ENCODE measurements at regions of chr12 and their contacts with region 1.

Region 1: GRCh38 chr12:42023733-42024494 is 120.8 kb downstream of the GXYLT1 start:
- DNase-seq: peak; percentile 41 to 82 (median 66)
- ATAC-seq: peak; percentile 90
- H3K4me3 ChIP-seq: peak overlapping the region; percentile 32 to 47
- H3K4me3 Mint-ChIP-seq: peak overlapping the region; percentile 78
- H3K27ac ChIP-seq: no peak overlapping the region
- H3K27ac Mint-ChIP-seq: no peak overlapping the region
- H3K4me1 ChIP-seq: peaks cover 4% of the 10 kb centered on the region
- H3K4me1 Mint-ChIP-seq: peaks cover 9% of the 10 kb centered on the region
- H3K27me3 ChIP-seq: no peaks in the 10 kb centered on the region
- H3K27me3 Mint-ChIP-seq: peaks cover 24% of the 10 kb centered on the region
- CTCF ChIP-seq: peak; percentile 95

Region 2: GRCh38 chr12:40946612-40947194 is 1077.2 kb before region 1 on chr12:
- CTCF ChIA-PET with region 1: interaction called, 12 read pairs
- POLR2A ChIA-PET with region 1: no interaction called
- intact Hi-C with region 1: loop called (anchors 2 to 5 kb)
- DNase-seq: peak in 2 of 9 experiments; percentile 17 to 33
- ATAC-seq: no peak
- H3K4me3 ChIP-seq: no peak overlapping the region
- H3K4me3 Mint-ChIP-seq: no peak overlapping the region
- H3K27ac ChIP-seq: no peak overlapping the region
- H3K27ac Mint-ChIP-seq: no peak overlapping the region
- H3K4me1 ChIP-seq: no peaks in the 10 kb centered on the region
- H3K4me1 Mint-ChIP-seq: no peaks in the 10 kb centered on the region
- H3K27me3 ChIP-seq: no peaks in the 10 kb centered on the region
- H3K27me3 Mint-ChIP-seq: no peaks in the 10 kb centered on the region
- CTCF ChIP-seq: peak; percentile 61

Region 3: DNA sequence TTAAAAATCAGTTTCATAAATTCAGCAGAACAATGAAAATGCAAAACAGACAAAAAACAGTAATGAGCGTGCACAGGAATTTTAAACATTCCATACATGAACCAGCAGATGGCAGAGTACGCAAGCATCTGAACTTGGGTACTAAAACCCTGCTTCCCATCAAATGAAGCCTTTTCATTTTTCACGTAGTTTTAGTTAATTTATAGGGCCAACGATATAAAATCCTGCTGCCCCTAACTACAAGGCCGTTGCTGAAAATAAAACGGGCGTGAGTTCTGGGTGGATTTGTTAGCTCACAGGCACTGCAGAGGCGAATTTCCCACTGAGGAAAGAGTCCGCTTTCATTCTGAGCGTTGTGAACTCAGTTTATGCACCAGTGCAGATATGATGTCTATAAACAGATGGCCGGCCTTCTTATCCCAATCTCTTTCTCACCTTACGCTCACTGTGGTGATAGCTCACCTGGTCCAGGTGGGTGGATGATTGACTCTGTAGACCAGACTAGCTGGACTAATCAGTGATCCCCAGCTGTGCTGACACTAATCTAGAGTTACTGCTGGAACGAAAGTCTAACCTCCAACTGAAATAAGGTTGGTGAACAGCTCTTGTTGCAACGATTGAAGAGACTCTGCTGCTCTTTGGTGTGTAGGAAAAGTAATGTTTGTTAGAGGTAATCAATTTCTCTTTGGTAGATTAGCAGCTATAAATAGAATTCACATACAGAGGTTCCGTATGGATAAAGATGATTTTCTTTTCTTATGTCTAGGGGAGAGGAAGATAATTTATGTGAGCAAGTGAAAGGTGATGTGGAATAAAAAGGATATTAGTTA is 746.6 kb before region 1 on chr12:
- CTCF ChIA-PET with region 1: interaction called, 3 read pairs
- POLR2A ChIA-PET with region 1: no interaction called
- intact Hi-C with region 1: loop called in 1 of 2 experiments (anchors 10 kb)
- DNase-seq: peak in 2 of 9 experiments; percentile 13 to 33
- ATAC-seq: no peak
- H3K4me3 ChIP-seq: no peak overlapping the region
- H3K4me3 Mint-ChIP-seq: no peak overlapping the region
- H3K27ac ChIP-seq: no peak overlapping the region
- H3K27ac Mint-ChIP-seq: no peak overlapping the region
- H3K4me1 ChIP-seq: no peaks in the 10 kb centered on the region
- H3K4me1 Mint-ChIP-seq: no peaks in the 10 kb centered on the region
- H3K27me3 ChIP-seq: no peaks in the 10 kb centered on the region
- H3K27me3 Mint-ChIP-seq: peaks cover 3% of the 10 kb centered on the region
- CTCF ChIP-seq: peak; percentile 37

Region 4: GRCh38 chr12:41784957-41785356 is 239.0 kb before region 1 on chr12:
- CTCF ChIA-PET with region 1: no interaction called
- POLR2A ChIA-PET with region 1: no interaction called
- intact Hi-C with region 1: no loop called
- DNase-seq: no peak
- ATAC-seq: no peak
- H3K4me3 ChIP-seq: no peak overlapping the region
- H3K4me3 Mint-ChIP-seq: no peak overlapping the region
- H3K27ac ChIP-seq: no peak overlapping the region
- H3K27ac Mint-ChIP-seq: no peak overlapping the region
- H3K4me1 ChIP-seq: no peaks in the 10 kb centered on the region
- H3K4me1 Mint-ChIP-seq: no peaks in the 10 kb centered on the region
- H3K27me3 ChIP-seq: no peaks in the 10 kb centered on the region
- H3K27me3 Mint-ChIP-seq: peaks cover 6% of the 10 kb centered on the region
- CTCF ChIP-seq: no peak

Region 5: DNA sequence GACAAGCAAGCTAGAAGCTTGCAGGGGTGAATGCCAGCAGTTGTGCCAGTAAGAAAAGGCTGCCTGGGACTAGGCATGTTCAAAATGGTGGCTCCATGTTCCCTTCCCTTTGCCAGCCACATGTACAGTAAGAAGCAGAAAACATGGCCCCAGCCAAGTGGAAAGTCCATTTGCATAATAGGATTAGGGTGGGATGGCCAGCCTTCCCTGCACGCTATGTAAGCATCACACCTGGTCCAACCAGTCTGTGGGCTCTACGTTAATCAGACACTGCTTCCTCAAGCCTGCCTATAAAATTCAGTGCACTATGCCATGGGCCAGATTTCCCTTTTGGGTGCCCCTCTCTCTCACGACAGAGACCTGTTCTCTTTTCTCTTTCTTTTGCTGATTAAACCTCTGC is 167.7 kb before region 1 on chr12:
- CTCF ChIA-PET with region 1: no interaction called
- POLR2A ChIA-PET with region 1: no interaction called
- intact Hi-C with region 1: no loop called
- DNase-seq: no peak
- ATAC-seq: no peak
- H3K4me3 ChIP-seq: no peak overlapping the region
- H3K4me3 Mint-ChIP-seq: no peak overlapping the region
- H3K27ac ChIP-seq: no peak overlapping the region
- H3K27ac Mint-ChIP-seq: no peak overlapping the region
- H3K4me1 ChIP-seq: no peaks in the 10 kb centered on the region
- H3K4me1 Mint-ChIP-seq: no peaks in the 10 kb centered on the region
- H3K27me3 ChIP-seq: no peaks in the 10 kb centered on the region
- H3K27me3 Mint-ChIP-seq: peaks cover 5% of the 10 kb centered on the region
- CTCF ChIP-seq: no peak

Region 6: GRCh38 chr12:41998436-41998835 is 25.5 kb before region 1 on chr12:
- CTCF ChIA-PET with region 1: interaction called, 12 read pairs
- POLR2A ChIA-PET with region 1: no interaction called
- intact Hi-C with region 1: no loop called
- DNase-seq: no peak
- ATAC-seq: no peak
- H3K4me3 ChIP-seq: no peak overlapping the region
- H3K4me3 Mint-ChIP-seq: no peak overlapping the region
- H3K27ac ChIP-seq: no peak overlapping the region
- H3K27ac Mint-ChIP-seq: no peak overlapping the region
- H3K4me1 ChIP-seq: no peaks in the 10 kb centered on the region
- H3K4me1 Mint-ChIP-seq: no peaks in the 10 kb centered on the region
- H3K27me3 ChIP-seq: no peaks in the 10 kb centered on the region
- H3K27me3 Mint-ChIP-seq: peaks cover 3% of the 10 kb centered on the region
- CTCF ChIP-seq: no peak

Region 7: GRCh38 chr12:42053456-42053855 is 29.5 kb after region 1 on chr12:
- CTCF ChIA-PET with region 1: interaction called, 10 read pairs
- POLR2A ChIA-PET with region 1: no interaction called
- intact Hi-C with region 1: no loop called
- DNase-seq: no peak
- ATAC-seq: no peak
- H3K4me3 ChIP-seq: no peak overlapping the region
- H3K4me3 Mint-ChIP-seq: no peak overlapping the region
- H3K27ac ChIP-seq: no peak overlapping the region
- H3K27ac Mint-ChIP-seq: no peak overlapping the region
- H3K4me1 ChIP-seq: no peaks in the 10 kb centered on the region
- H3K4me1 Mint-ChIP-seq: no peaks in the 10 kb centered on the region
- H3K27me3 ChIP-seq: peaks cover 2 to 4% of the 10 kb centered on the region in 2 experiments
- H3K27me3 Mint-ChIP-seq: peaks cover 21% of the 10 kb centered on the region
- CTCF ChIP-seq: no peak

Region 8: DNA sequence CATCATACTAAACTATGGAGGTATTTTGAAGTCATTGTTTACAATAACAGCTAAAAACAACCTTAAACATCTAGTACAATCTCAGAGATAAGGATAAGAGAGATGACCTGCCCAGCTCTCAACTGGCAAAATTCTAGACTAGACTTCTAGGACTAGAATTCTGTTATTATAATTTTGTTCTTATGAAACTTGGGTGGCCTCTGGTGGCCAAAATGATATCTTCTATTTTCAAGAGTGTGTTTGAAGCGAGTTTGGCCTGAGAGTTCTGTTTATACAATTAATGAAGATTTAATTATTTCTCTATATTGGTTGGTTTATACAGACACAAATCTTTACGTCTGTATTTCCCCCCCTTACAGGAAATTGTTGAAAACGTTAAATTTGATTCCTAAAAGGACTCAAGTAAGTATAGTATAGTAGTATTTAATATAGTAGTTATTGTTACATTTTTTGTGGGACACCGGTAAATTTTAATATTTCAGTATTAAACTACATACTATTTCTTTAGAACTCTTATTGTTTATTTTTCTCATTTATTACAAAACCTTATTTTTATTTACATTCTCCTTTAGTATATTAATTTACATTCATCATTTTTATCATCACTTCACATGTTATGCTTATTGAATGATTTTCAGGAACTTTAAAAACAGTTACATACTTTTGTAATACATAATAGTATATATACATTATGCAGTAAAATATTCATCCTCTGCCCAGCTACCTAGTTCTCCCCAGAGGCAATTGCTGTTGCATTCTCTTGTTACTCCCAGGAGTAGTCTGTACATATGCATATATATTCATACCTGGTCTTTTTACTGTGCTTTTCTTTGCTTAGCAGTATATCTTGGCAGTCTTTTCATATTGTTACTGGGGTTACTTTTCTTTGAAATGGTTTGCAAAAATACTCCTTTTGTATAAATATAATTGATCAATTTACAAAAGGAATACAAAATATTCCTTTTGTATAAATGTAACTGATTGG is 308.7 kb after region 1 on chr12:
- CTCF ChIA-PET with region 1: interaction called, 8 read pairs
- POLR2A ChIA-PET with region 1: no interaction called
- intact Hi-C with region 1: loop called in 1 of 2 experiments (anchors 5 kb)
- DNase-seq: peak in 4 of 9 experiments; percentile 26 to 65 (median 46)
- ATAC-seq: peak; percentile 64
- H3K4me3 ChIP-seq: no peak overlapping the region
- H3K4me3 Mint-ChIP-seq: no peak overlapping the region
- H3K27ac ChIP-seq: no peak overlapping the region
- H3K27ac Mint-ChIP-seq: peak overlapping the region; percentile 43
- H3K4me1 ChIP-seq: peaks cover 26% of the 10 kb centered on the region
- H3K4me1 Mint-ChIP-seq: peaks cover 69% of the 10 kb centered on the region
- H3K27me3 ChIP-seq: no peaks in the 10 kb centered on the region
- H3K27me3 Mint-ChIP-seq: no peaks in the 10 kb centered on the region
- CTCF ChIP-seq: peak; percentile 78